Testis (tissue), 5 donors: ENCODE measurements at regions of chr20 and their contacts with region 1.

Region 1: DNA sequence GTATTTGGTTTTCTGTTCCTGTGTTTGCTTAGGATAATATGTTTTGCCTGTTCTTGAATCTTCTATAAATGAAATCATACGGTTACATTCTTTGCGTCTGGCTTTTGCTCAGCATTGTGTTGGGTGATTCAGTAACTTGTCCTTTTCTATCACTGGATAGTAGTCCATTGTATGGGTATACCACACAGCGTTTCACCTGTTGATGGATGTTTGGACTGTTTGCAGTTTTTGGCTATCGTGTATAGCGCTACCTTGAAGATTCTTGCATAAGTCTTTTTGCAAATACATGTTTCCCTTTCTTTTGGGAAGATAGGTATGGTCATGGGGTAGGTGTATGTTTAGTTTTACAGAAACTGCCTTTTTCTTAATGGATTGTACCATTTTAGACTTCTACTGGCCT is 9.5 kb downstream of the MYBL2 start:
- DNase-seq: no peak
- H3K4me3 ChIP-seq: no peak overlapping the region
- H3K27ac ChIP-seq: no peak overlapping the region
- H3K4me1 ChIP-seq: no peaks in the 10 kb centered on the region
- H3K27me3 ChIP-seq: no peaks in the 10 kb centered on the region
- CTCF ChIP-seq: no peak
- POLR2A ChIP-seq: no peak

Region 2: GRCh38 chr20:43252761-43253160 is 423.6 kb before region 1 on chr20:
- intact Hi-C with region 1: no loop called
- DNase-seq: no peak
- H3K4me3 ChIP-seq: no peak overlapping the region
- H3K27ac ChIP-seq: no peak overlapping the region
- H3K4me1 ChIP-seq: no peaks in the 10 kb centered on the region
- H3K27me3 ChIP-seq: no peaks in the 10 kb centered on the region
- CTCF ChIP-seq: no peak
- POLR2A ChIP-seq: no peak

Region 3: DNA sequence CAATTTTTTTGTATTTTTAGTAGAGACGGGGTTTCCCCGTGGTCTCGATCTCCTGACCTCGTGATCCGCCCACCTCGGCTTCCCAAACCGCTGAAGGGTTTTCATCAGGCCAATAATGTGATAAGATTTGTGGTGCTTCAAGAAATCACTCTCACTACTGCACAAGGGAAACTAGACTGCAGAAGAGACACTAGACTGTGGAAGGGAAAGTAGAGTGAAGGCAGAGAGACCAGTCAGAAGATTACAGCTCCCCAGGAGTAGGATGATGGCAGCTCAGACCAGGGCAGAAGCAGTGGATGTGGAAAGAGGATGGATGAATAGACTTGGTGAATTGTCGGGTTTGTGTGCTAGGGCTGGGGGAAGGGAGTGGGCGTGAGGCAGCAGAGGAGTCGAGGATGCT is 98.4 kb after region 1 on chr20:
- intact Hi-C with region 1: loop called (anchors 5 kb)
- DNase-seq: no peak
- H3K4me3 ChIP-seq: no peak overlapping the region
- H3K27ac ChIP-seq: no peak overlapping the region
- H3K4me1 ChIP-seq: no peaks in the 10 kb centered on the region
- H3K27me3 ChIP-seq: no peaks in the 10 kb centered on the region
- CTCF ChIP-seq: no peak
- POLR2A ChIP-seq: no peak

Region 4: DNA sequence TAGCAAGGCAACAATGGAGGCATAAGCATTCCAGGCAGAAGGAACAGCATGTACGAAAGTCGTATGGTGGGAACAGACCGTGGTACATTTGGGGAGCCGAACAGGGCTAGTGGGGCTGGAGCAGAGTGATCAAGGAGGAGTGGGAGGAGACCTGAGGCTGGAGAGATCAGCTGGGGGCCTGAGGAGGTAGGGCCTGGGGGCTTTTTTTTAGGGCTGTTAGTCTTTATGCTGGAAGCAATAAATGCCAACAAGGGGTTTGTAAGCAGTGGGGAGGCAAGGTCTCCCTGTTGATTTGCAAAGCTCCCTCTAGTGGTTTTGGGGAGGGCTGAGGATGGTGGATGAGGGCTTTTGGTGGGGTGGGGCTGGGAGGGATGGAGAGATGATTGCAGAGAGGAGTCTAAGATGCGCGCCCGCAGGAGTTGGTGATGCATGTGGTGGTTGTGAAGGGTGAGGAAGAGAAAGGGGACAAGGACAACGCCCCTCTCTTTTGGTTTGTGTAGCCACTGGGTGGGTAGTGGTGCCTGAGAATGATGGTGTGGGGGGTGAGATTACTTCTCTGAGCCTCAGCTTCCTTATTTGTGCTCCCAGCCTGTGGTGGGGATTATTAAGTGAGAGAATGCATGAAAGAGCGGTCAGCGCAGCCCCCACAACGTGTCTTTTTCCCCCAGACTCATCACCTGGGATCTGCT is 164.2 kb after region 1 on chr20:
- intact Hi-C with region 1: no loop called
- DNase-seq: no peak
- H3K4me3 ChIP-seq: no peak overlapping the region
- H3K27ac ChIP-seq: no peak overlapping the region
- H3K4me1 ChIP-seq: no peaks in the 10 kb centered on the region
- H3K27me3 ChIP-seq: no peaks in the 10 kb centered on the region
- CTCF ChIP-seq: peak in 1 of 3 experiments; percentile 21
- POLR2A ChIP-seq: no peak

Region 5: GRCh38 chr20:44018259-44018941 is 342.0 kb after region 1 on chr20:
- intact Hi-C with region 1: no loop called
- DNase-seq: peak; percentile 38
- H3K4me3 ChIP-seq: no peak overlapping the region
- H3K27ac ChIP-seq: no peak overlapping the region
- H3K4me1 ChIP-seq: peaks cover 7% of the 10 kb centered on the region
- H3K27me3 ChIP-seq: no peaks in the 10 kb centered on the region
- CTCF ChIP-seq: no peak
- POLR2A ChIP-seq: no peak